CD8-positive, alpha-beta memory T cell (primary cell): ENCODE measurements at regions of chr16 and their contacts with region 1.

Region 1: GRCh38 chr16:84738255-84739038 is 38.6 kb downstream of the USP10 start:
- DNase-seq: peak; percentile 60 to 81 (median 67)
- H3K4me3 ChIP-seq: peak overlapping the region; percentile 44
- H3K4me3 Mint-ChIP-seq: peak overlapping the region in 6 of 7 donors; percentile 60 to 80 (median 75)
- H3K27ac ChIP-seq: no peak overlapping the region
- H3K27ac Mint-ChIP-seq: peak overlapping the region; percentile 1 to 89 (median 64)
- H3K4me1 ChIP-seq: peaks cover 26% of the 10 kb centered on the region
- H3K4me1 Mint-ChIP-seq: peaks cover 31 to 60% (median 51%) of the 10 kb centered on the region in 3 donors
- H3K27me3 ChIP-seq: no peaks in the 10 kb centered on the region
- H3K27me3 Mint-ChIP-seq: peaks cover 0 to 1% of the 10 kb centered on the region in 2 donors

Region 2: GRCh38 chr16:84720177-84720579 is 18.3 kb before region 1 on chr16:
- CTCF ChIA-PET with region 1: interaction called, 59 read pairs
- POLR2A ChIA-PET with region 1: no interaction called
- DNase-seq: no peak
- H3K4me3 ChIP-seq: no peak overlapping the region
- H3K4me3 Mint-ChIP-seq: no peak overlapping the region
- H3K27ac ChIP-seq: no peak overlapping the region
- H3K27ac Mint-ChIP-seq: peak overlapping the region in 1 of 8 donors; percentile 34
- H3K4me1 ChIP-seq: peaks cover 28% of the 10 kb centered on the region
- H3K4me1 Mint-ChIP-seq: peaks cover 49 to 82% (median 66%) of the 10 kb centered on the region in 3 donors
- H3K27me3 ChIP-seq: no peaks in the 10 kb centered on the region
- H3K27me3 Mint-ChIP-seq: no peaks in the 10 kb centered on the region

Region 3: DNA sequence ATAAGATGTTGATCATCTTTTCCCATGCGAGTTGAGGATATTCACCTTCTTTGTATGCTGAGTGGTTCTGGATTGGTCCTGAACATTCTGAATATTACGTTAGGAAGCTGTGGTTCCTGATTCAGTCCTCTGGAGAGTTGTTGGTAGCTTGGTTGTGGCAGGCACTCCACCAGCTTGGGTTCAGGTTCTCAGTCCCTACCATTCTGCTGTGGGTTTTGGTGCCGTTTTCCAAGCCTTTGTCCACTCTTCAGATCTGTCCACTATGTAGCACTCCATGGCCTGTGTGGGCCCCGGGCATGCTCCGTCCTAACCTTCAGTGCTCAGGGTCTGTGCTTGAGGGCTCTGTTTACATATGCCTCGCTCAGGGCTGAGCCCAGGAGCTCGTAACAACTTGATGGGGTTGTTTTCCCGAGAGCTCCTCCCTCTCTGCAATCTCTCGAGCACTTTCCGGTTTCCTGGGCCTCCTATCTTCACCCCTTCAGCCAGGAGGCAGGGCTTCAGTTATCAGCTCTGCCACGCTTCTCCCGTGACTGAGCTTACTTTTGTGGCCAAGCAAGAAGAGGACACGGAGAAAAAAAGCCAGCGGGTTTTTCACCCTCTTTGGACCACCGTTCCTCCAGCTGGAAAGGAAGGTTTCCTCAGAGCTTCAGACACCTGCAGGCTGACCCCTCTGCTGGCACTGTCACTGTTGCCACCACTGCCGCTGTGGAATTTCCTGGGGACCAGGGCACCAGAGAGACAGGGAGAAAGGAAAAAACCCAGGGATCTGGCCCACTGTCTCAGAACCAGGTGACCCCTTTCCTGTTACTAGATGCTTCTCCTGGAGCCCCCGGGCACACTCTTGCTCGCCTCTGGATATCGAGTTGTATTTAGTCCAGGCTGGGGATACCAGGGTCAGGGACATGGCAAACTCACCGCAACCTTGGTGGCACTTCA is 308.8 kb after region 1 on chr16:
- CTCF ChIA-PET with region 1: no interaction called
- POLR2A ChIA-PET with region 1: no interaction called
- DNase-seq: peak in 1 of 5 donors; percentile 23
- H3K4me3 ChIP-seq: peak overlapping the region; percentile 30
- H3K4me3 Mint-ChIP-seq: no peak overlapping the region
- H3K27ac ChIP-seq: peak overlapping the region; percentile 94
- H3K27ac Mint-ChIP-seq: peak overlapping the region in 1 of 8 donors; percentile 74
- H3K4me1 ChIP-seq: peaks cover 4% of the 10 kb centered on the region
- H3K4me1 Mint-ChIP-seq: peaks cover 6 to 23% (median 16%) of the 10 kb centered on the region in 3 donors
- H3K27me3 ChIP-seq: no peaks in the 10 kb centered on the region
- H3K27me3 Mint-ChIP-seq: no peaks in the 10 kb centered on the region